MCF 10A (cell line): ENCODE measurements at regions of chr5 and their contacts with region 1.

Region 1: GRCh38 chr5:38420691-38421390 is 135.6 kb downstream of the LIFR start:
- DNase-seq: peak; percentile 84
- H3K4me3 Mint-ChIP-seq: no peak overlapping the region
- H3K27ac Mint-ChIP-seq: no peak overlapping the region
- H3K4me1 Mint-ChIP-seq: peaks cover 8% of the 10 kb centered on the region
- H3K27me3 Mint-ChIP-seq: no peaks in the 10 kb centered on the region
- CTCF ChIP-seq: peak; percentile 67

Region 2: DNA sequence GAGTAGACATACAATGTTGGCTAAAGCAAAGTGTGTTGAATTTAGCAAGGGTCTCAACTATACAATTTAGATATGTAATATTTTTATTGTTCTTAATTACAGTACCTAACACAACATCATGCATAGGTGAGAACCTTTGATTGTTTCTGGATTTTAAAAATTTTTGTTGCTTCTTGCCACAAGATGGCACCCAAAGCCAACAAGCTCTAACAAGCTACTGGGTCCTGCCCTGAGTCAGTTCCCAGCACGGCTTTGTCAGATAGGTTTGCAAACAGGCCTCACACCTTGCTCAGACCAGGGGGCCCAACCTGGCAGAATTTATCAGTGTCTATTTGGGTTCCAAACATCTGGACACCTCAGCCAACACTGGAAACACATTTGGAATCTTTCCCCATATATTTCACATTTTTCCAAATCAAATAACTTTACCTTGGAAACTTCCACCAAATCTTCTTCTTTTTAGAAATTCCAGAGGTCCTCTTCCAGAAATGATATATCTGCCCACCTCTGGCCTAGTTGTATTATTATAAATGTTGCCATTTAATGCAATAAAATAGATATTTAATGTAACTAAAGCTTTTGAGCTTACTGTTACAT is 212.0 kb before region 1 on chr5:
- CTCF ChIA-PET with region 1: interaction called, 6 read pairs
- POLR2A ChIA-PET with region 1: no interaction called
- intact Hi-C with region 1: loop called (anchors 5 kb)
- DNase-seq: peak; percentile 66
- H3K4me3 Mint-ChIP-seq: no peak overlapping the region
- H3K27ac Mint-ChIP-seq: no peak overlapping the region
- H3K4me1 Mint-ChIP-seq: peaks cover 11% of the 10 kb centered on the region
- H3K27me3 Mint-ChIP-seq: peaks cover 44% of the 10 kb centered on the region
- CTCF ChIP-seq: peak; percentile 77

Region 3: DNA sequence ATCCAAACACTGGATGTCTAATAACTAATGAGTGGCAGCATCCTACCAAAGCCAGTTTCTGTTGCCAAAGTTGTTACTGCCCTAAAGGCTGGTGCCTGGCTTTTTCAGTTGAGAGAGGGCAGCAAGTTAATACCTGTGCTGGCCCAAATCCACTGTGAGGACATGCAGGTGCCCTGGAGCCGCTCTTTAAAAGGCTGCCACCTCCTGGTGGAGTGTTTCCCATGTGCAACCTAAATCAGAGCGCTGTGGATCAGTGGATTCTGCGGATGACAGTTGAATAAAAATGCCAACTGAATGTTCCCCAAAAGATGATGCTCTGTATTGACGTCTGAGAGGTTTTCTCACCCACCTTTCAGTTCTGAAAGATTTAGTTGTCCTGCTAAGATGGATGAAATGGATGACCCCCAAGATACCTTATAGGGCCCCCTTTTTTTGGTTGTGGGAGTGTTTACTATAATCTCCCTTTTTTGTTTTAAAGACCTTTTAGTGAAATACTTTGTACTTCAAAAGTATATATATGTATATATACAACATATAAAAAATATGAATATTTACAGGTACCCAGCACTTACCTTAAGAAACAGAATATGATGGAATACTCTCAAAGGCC is 16.1 kb before region 1 on chr5:
- CTCF ChIA-PET with region 1: interaction called, 21 read pairs
- POLR2A ChIA-PET with region 1: interaction called, 3 read pairs
- intact Hi-C with region 1: no loop called
- DNase-seq: peak; percentile 60
- H3K4me3 Mint-ChIP-seq: no peak overlapping the region
- H3K27ac Mint-ChIP-seq: no peak overlapping the region
- H3K4me1 Mint-ChIP-seq: peaks cover 6% of the 10 kb centered on the region
- H3K27me3 Mint-ChIP-seq: peaks cover 38% of the 10 kb centered on the region
- CTCF ChIP-seq: peak; percentile 13

Region 4: GRCh38 chr5:38551030-38552017 is 130.5 kb after region 1 on chr5:
- CTCF ChIA-PET with region 1: interaction called, 17 read pairs
- POLR2A ChIA-PET with region 1: interaction called, 3 read pairs
- intact Hi-C with region 1: no loop called
- DNase-seq: peak; percentile 72
- H3K4me3 Mint-ChIP-seq: no peak overlapping the region
- H3K27ac Mint-ChIP-seq: no peak overlapping the region
- H3K4me1 Mint-ChIP-seq: peaks cover 5% of the 10 kb centered on the region
- H3K27me3 Mint-ChIP-seq: no peaks in the 10 kb centered on the region
- CTCF ChIP-seq: peak; percentile 57

Region 5: GRCh38 chr5:38707352-38708210 is 286.7 kb after region 1 on chr5:
- CTCF ChIA-PET with region 1: no interaction called
- POLR2A ChIA-PET with region 1: no interaction called
- intact Hi-C with region 1: no loop called
- DNase-seq: no peak
- H3K4me3 Mint-ChIP-seq: no peak overlapping the region
- H3K27ac Mint-ChIP-seq: peak overlapping the region; percentile 33
- H3K4me1 Mint-ChIP-seq: no peaks in the 10 kb centered on the region
- H3K27me3 Mint-ChIP-seq: no peaks in the 10 kb centered on the region
- CTCF ChIP-seq: no peak

Region 6: GRCh38 chr5:38922199-38922598 is 501.4 kb after region 1 on chr5:
- CTCF ChIA-PET with region 1: interaction called, 16 read pairs
- POLR2A ChIA-PET with region 1: interaction called, 3 read pairs
- intact Hi-C with region 1: no loop called
- DNase-seq: peak; percentile 65
- H3K4me3 Mint-ChIP-seq: no peak overlapping the region
- H3K27ac Mint-ChIP-seq: no peak overlapping the region
- H3K4me1 Mint-ChIP-seq: no peaks in the 10 kb centered on the region
- H3K27me3 Mint-ChIP-seq: no peaks in the 10 kb centered on the region
- CTCF ChIP-seq: peak; percentile 84